ENCODE measurements at regions of chr3 and their contacts with region 1.

Region 1: DNA sequence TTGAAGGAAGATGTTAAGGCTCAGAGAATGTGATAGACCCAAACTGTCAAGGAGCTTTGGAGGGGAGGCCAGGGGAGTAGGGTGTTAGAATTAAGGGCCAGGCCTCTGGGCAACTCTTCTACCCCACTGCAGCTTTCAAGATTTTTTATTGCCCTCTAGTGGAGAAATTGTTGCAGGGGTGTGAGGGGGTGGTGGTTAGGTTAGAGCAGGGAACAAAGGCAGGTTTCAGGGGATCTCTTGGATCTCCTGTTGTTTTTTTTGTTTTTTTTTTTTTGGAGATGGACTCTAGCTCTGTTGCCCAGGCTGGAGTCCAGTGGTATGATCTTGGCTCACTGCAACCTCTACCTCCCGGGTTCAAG is 1.4 kb upstream of the SEC13 start:
- DNase-seq: no peak
- ATAC-seq: no peak
- H3K4me3 Mint-ChIP-seq: no peak overlapping the region
- H3K27ac Mint-ChIP-seq: no peak overlapping the region
- H3K4me1 Mint-ChIP-seq: peaks cover 31% of the 10 kb centered on the region
- H3K27me3 Mint-ChIP-seq: peaks cover 9% of the 10 kb centered on the region
- CTCF ChIP-seq: no peak

Region 2: GRCh38 chr3:9503283-9503682 is 819.0 kb before region 1 on chr3:
- CTCF ChIA-PET with region 1: no interaction called
- POLR2A ChIA-PET with region 1: no interaction called
- intact Hi-C with region 1: loop called (anchors 5 kb)
- DNase-seq: peak; percentile 63
- ATAC-seq: peak; percentile 83
- H3K4me3 Mint-ChIP-seq: no peak overlapping the region
- H3K27ac Mint-ChIP-seq: no peak overlapping the region
- H3K4me1 Mint-ChIP-seq: peaks cover 26% of the 10 kb centered on the region
- H3K27me3 Mint-ChIP-seq: peaks cover 35% of the 10 kb centered on the region
- CTCF ChIP-seq: peak; percentile 50

Region 3: GRCh38 chr3:9890249-9891071 is 431.9 kb before region 1 on chr3 and contains the start of gene JAGN1:
- CTCF ChIA-PET with region 1: no interaction called
- POLR2A ChIA-PET with region 1: interaction called, 6 read pairs
- intact Hi-C with region 1: loop called (anchors 1 kb)
- DNase-seq: peak; percentile 85
- ATAC-seq: peak; percentile 86
- H3K4me3 Mint-ChIP-seq: peak within 1 kb of the TSS; percentile 94
- H3K27ac Mint-ChIP-seq: peak within 1 kb of the TSS; percentile 97
- H3K4me1 Mint-ChIP-seq: peaks cover 44% of the 10 kb centered on the region
- H3K27me3 Mint-ChIP-seq: no peaks in the 10 kb centered on the region
- CTCF ChIP-seq: no peak
- total RNA-seq, gene JAGN1: 30.9 and 32.1 TPM in 2 replicates

Region 4: GRCh38 chr3:9976721-9977709 is 345.3 kb before region 1 on chr3:
- CTCF ChIA-PET with region 1: no interaction called
- POLR2A ChIA-PET with region 1: no interaction called
- intact Hi-C with region 1: no loop called
- DNase-seq: no peak
- ATAC-seq: no peak
- H3K4me3 Mint-ChIP-seq: no peak overlapping the region
- H3K27ac Mint-ChIP-seq: no peak overlapping the region
- H3K4me1 Mint-ChIP-seq: peaks cover 3% of the 10 kb centered on the region
- H3K27me3 Mint-ChIP-seq: no peaks in the 10 kb centered on the region
- CTCF ChIP-seq: no peak

Region 5: DNA sequence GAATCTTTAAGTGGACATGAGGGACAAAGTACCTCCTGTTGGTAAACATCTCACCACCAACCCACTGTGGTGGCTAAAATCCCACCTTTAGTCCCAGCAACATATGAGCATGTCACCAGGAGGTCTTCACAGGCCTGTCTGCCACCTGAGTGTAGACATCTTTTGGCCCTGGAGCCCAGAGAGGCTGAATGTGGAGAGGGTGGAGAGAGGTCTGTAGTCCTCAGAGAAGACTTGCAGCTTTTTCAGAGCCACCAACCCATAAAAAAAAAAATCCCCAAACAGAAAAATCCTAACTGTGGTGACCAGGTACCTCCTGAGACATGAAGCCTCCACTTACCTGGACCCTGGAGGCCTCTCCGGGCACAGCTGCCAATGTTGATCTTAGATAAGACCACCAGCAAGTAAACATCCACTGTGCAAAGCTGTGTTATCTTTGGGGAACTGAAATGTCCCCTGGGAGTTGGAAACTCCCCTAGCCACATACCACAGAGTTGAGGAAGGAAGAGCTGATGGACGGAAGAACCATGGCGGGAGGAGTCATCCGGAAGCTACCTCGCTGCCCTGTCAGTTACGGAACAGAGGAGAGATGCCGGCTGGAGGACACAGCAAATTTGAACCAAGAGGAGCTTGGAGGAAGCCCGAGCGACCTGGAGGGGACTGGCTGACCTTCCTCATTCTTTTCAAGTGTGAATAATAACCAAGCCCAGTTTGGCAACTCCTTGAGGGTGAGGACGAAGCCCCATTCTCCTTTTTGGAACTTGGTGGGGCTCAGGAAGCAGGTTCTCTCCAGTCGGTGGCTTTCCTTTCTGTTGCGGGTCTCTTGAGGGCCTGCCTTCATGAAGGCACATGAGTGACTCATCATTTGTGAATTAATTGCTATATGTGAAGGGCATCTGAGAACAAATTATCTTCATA is 29.6 kb before region 1 on chr3 and contains the start of gene GHRL:
- CTCF ChIA-PET with region 1: no interaction called
- POLR2A ChIA-PET with region 1: interaction called, 15 read pairs
- intact Hi-C with region 1: loop called (anchors 1 kb)
- DNase-seq: peak; percentile 50
- ATAC-seq: peak; percentile 91
- H3K4me3 Mint-ChIP-seq: peak within 1 kb of the TSS; percentile 81
- H3K27ac Mint-ChIP-seq: peak within 1 kb of the TSS; percentile 85
- H3K4me1 Mint-ChIP-seq: peaks cover 36% of the 10 kb centered on the region
- H3K27me3 Mint-ChIP-seq: no peaks in the 10 kb centered on the region
- CTCF ChIP-seq: no peak
- total RNA-seq, gene GHRL: 1.4 and 2.8 TPM in 2 replicates

Region 6: GRCh38 chr3:10340476-10340875 is 18.1 kb after region 1 on chr3:
- CTCF ChIA-PET with region 1: no interaction called
- POLR2A ChIA-PET with region 1: no interaction called
- intact Hi-C with region 1: no loop called
- DNase-seq: no peak
- ATAC-seq: no peak
- H3K4me3 Mint-ChIP-seq: no peak overlapping the region
- H3K27ac Mint-ChIP-seq: no peak overlapping the region
- H3K4me1 Mint-ChIP-seq: peaks cover 7% of the 10 kb centered on the region
- H3K27me3 Mint-ChIP-seq: peaks cover 2% of the 10 kb centered on the region
- CTCF ChIP-seq: no peak

Region 7: DNA sequence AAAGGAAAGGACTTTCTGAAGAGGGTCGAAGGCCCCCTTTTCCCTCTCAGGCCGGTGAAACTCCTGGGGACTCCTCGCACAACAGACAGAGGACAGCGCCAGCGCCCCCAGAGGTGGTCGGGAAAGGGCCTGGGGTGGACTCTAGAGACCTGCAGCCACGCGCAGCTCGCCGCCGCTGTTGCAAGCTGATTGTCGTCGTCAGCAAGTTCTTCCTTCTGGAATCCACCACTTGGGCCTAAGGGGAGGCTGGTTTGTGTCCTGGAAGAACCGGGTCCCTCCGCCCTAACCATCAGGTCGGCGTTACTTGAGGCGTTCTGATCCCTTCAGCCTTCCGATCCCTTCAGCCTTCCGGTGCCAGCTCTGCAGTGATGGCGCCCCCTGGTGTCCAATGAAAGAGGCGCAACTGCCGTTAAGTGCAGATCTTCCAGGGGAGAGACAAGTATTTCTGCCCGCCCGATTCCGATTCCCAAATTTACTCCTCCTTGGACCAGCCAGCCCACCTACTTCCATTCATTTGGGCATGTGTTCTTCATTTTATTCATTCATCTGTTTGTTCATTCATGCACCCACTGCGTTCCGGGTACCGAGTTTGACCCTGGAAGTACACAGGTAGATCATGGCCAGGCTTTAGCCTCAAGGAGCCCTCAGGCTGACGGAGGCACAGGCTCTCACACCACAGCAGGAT is 416.5 kb after region 1 on chr3:
- CTCF ChIA-PET with region 1: interaction called, 6 read pairs
- POLR2A ChIA-PET with region 1: no interaction called
- intact Hi-C with region 1: loop called (anchors 1 kb)
- DNase-seq: peak; percentile 70
- ATAC-seq: peak; percentile 82
- H3K4me3 Mint-ChIP-seq: peak overlapping the region; percentile 79
- H3K27ac Mint-ChIP-seq: no peak overlapping the region
- H3K4me1 Mint-ChIP-seq: peaks cover 12% of the 10 kb centered on the region
- H3K27me3 Mint-ChIP-seq: peaks cover 40% of the 10 kb centered on the region
- CTCF ChIP-seq: peak; percentile 46